ENCODE measurements at regions of chr11 and their contacts with region 1.

Region 1: GRCh38 chr11:7442588-7443215 is 42.6 kb upstream of the OLFML1 start:
- DNase-seq: peak; percentile 77
- H3K4me3 ChIP-seq: no peak overlapping the region
- H3K27ac ChIP-seq: no peak overlapping the region
- H3K4me1 ChIP-seq: no peaks in the 10 kb centered on the region
- H3K27me3 ChIP-seq: no peaks in the 10 kb centered on the region
- CTCF ChIP-seq: peak; percentile 39 to 81 (median 71)
- EP300 ChIP-seq: no peak
- POLR2A ChIP-seq: no peak

Region 2: GRCh38 chr11:7098235-7098832 is 344.4 kb before region 1 on chr11:
- intact Hi-C with region 1: loop called (anchors 1 kb)
- DNase-seq: no peak
- H3K4me3 ChIP-seq: no peak overlapping the region
- H3K27ac ChIP-seq: no peak overlapping the region
- H3K4me1 ChIP-seq: no peaks in the 10 kb centered on the region
- H3K27me3 ChIP-seq: no peaks in the 10 kb centered on the region
- CTCF ChIP-seq: peak in 3 of 4 experiments; percentile 37 to 61 (median 38)
- EP300 ChIP-seq: no peak
- POLR2A ChIP-seq: no peak

Region 3: DNA sequence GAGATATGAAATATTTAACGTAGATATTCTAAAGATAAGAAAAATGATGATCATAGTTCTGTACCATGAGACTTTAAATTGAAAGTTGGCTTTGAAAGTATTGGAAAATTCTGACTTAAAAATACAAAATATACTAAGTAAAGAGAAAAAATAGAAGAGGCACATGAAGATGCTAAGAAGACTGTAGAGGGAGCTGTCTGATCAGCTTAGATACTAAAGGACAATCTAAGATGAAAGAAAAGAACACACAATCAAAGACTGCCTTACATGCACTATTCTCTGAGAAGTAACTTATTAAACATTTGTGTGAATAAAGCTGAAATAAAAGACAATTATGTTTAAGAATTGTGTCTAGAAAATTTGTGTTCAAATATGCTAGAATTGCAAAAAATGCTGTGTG is 298.8 kb before region 1 on chr11:
- intact Hi-C with region 1: loop called (anchors 2 kb)
- DNase-seq: no peak
- H3K4me3 ChIP-seq: no peak overlapping the region
- H3K27ac ChIP-seq: no peak overlapping the region
- H3K4me1 ChIP-seq: no peaks in the 10 kb centered on the region
- H3K27me3 ChIP-seq: no peaks in the 10 kb centered on the region
- CTCF ChIP-seq: peak in 2 of 4 experiments; percentile 27 to 46
- EP300 ChIP-seq: no peak
- POLR2A ChIP-seq: no peak

Measured in sigmoid colon (tissue), 7 donors.